Breast epithelium (tissue), 4 donors: ENCODE measurements at regions of chr17 and their contacts with region 1.

Region 1: GRCh38 chr17:1716076-1716995 is 6.2 kb upstream of the TLCD2 start:
- DNase-seq: peak; percentile 100
- H3K4me3 ChIP-seq: peak overlapping the region; percentile 87 to 100 (median 96)
- H3K27ac ChIP-seq: peak overlapping the region; percentile 98 to 100
- H3K4me1 ChIP-seq: peaks cover 11 to 13% of the 10 kb centered on the region in 2 donors
- H3K27me3 ChIP-seq: no peaks in the 10 kb centered on the region
- CTCF ChIP-seq: peak in 1 of 3 donors; percentile 25
- POLR2A ChIP-seq: peak; percentile 88

Region 2: GRCh38 chr17:1227917-1228780 is 488.2 kb before region 1 on chr17:
- intact Hi-C with region 1: no loop called
- DNase-seq: no peak
- H3K4me3 ChIP-seq: peak overlapping the region; percentile 60 to 78 (median 74)
- H3K27ac ChIP-seq: no peak overlapping the region
- H3K4me1 ChIP-seq: peaks cover 6 to 15% of the 10 kb centered on the region in 2 donors
- H3K27me3 ChIP-seq: peaks cover 0 to 55% of the 10 kb centered on the region in 2 donors
- CTCF ChIP-seq: no peak
- POLR2A ChIP-seq: no peak

Region 3: GRCh38 chr17:1673041-1673785 is 43.1 kb before region 1 on chr17:
- intact Hi-C with region 1: loop called (anchors 1 kb)
- DNase-seq: no peak
- H3K4me3 ChIP-seq: no peak overlapping the region
- H3K27ac ChIP-seq: no peak overlapping the region
- H3K4me1 ChIP-seq: no peaks in the 10 kb centered on the region
- H3K27me3 ChIP-seq: no peaks in the 10 kb centered on the region
- CTCF ChIP-seq: no peak
- POLR2A ChIP-seq: no peak